ENCODE measurements at regions of chr15 and their contacts with region 1.

Region 1: DNA sequence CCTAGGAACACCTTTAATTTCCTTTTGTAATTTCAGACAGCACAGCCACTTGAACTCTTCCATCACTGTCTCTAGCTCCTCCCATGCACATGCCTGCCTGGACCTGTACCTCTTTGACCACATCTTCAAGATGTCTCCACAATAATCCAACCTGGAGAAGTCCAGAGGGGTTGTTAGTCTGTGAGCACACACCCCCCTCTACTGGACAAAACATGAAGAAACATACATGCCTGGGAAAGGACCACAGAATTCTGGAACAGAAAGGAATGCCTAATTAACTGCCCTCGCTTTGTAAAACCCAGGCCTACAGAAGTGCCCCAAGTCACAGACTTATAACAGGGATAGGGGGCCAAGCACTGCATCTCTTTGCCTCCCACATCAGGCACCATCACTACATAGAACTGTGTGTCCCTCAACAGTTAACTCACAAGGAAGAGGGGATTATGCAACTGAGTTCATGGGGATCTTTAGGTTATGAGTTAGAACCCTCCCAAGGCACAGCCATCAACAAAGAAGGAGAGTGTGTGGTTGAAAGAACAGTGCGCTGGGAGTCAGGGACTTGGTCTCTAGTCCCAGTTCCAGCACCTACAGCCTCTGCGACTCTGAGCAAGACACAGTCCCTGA is 61.7 kb downstream of the FMN1 start:
- DNase-seq: peak; percentile 63
- H3K4me3 ChIP-seq: no peak overlapping the region
- H3K27ac ChIP-seq: no peak overlapping the region
- H3K4me1 ChIP-seq: no peaks in the 10 kb centered on the region
- H3K27me3 ChIP-seq: no peaks in the 10 kb centered on the region
- CTCF ChIP-seq: peak; percentile 58

Region 2: DNA sequence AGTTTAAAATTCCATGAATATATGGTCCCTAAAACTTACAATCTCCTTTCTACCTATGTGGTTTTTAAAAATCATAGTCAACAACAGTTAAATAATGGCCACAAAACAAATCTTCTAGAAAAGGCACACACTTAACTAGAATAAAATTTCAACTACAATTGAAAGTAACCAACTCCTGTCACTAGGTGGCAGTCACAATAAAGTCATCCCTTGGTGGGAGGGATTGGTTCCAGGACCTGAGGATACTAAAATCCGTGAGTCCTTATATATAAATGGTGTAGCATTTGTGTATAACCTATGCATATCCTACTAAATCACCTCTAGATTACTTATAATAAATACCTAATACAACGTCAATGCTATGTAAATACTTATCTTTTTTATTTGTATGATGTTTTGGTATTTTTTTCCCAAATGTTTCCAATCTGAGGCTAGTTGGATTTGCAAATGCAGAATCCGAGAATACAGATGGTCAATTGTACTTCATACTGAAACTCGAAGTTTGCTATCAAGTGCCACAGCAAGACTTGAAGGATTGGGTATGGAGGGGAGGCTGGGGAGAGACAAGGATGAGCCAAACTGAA is 110.9 kb before region 1 on chr15:
- intact Hi-C with region 1: loop called (anchors 5 kb)
- DNase-seq: peak; percentile 46
- H3K4me3 ChIP-seq: no peak overlapping the region
- H3K27ac ChIP-seq: no peak overlapping the region
- H3K4me1 ChIP-seq: no peaks in the 10 kb centered on the region
- H3K27me3 ChIP-seq: no peaks in the 10 kb centered on the region
- CTCF ChIP-seq: peak; percentile 42

Region 3: DNA sequence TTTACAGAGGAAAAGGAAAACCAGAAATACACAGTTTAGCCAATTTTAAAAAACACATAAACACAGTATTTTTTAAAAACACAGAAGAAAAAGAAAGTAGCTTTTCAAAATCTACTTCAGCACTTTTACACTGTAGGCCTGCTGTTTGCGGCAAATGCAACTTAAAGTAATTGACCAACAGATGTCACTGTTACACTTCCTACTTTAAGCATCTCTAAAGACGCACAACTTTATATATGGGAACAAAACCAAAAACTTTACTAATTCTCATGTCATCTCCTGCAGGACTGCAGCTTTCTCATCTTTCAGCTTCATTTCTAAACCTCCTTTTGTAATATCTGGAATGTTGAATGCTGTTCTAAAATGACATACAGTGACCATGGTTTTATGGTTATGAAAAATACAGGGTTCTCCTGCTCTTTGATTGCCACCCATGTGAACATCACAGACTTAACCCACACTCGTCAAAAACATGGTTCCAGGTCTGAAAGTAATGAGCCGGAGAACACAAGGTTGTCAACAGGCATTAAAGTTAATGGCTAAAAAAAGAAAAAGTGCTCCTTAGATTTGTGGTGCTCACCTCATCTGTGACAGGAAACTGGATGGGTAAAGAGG is 46.2 kb before region 1 on chr15:
- intact Hi-C with region 1: loop called (anchors 2 kb)
- DNase-seq: no peak
- H3K4me3 ChIP-seq: no peak overlapping the region
- H3K27ac ChIP-seq: no peak overlapping the region
- H3K4me1 ChIP-seq: no peaks in the 10 kb centered on the region
- H3K27me3 ChIP-seq: no peaks in the 10 kb centered on the region
- CTCF ChIP-seq: peak; percentile 33

Region 4: DNA sequence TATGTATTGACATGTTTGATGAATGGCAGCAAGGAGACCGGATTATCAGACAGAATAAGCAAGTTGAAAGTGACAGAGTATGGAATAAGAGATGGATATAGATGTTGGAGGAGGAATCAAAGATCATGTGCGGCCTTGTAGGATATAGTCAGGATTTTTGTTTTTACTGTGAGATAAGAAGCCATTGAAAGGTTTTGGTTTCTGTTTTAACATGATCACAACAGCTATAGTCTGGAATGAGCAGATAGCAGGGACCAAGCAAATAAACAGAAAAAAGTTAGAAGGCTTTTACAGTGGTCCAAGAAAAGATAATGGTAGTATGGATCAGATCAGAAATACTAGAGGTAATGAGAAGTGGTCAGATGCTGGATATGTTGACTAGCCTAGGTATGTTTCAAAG is 1152.1 kb after region 1 on chr15:
- intact Hi-C with region 1: no loop called
- DNase-seq: no peak
- H3K4me3 ChIP-seq: no peak overlapping the region
- H3K27ac ChIP-seq: no peak overlapping the region
- H3K4me1 ChIP-seq: no peaks in the 10 kb centered on the region
- H3K27me3 ChIP-seq: no peaks in the 10 kb centered on the region
- CTCF ChIP-seq: no peak

Measured in colonic mucosa (tissue), 4 donors.